Thyroid gland (tissue), 4 donors: ENCODE measurements at regions of chr20 and their contacts with region 1.

Region 1: DNA sequence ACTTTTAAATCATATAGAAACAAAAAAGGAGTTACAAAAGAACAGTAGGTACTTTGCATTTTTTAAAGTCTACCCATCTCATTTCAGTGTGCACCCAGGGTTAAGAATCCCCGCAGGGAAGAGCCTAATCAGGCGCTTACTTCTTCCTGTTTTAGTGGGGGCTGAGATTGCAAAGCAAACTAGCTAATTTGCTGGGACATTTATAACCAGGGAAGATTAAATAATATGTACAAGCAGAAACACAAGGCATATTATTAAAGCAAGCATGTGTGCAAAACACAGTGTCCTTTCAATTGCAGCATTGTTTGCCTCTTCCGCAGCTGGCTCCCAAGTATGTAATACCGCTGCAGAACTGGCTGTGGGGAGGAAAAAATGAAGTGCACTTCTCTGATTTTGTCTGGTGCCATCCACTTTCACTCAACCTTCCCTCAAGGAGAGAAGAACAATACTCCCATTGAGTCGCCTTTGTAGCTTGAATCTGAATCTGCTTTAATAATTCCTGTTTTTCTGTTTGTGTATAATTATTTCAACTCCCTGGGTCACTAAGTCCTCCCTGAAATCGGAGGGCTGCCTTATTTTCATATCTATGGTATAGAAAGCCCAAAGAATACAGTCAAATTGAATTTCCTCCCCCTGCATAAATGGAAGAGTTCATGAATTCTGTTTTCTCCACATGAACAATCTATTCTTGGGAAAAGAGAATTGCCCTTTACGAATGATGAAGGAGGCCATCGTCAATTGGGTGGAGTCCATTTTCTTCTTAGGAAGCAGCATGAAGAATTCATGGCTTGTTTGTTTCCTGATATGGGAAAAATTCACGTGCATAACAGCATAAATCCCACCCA is 23.3 kb upstream of the BCAS1 start:
- DNase-seq: no peak
- H3K4me3 ChIP-seq: no peak overlapping the region
- H3K27ac ChIP-seq: no peak overlapping the region
- H3K4me1 ChIP-seq: no peaks in the 10 kb centered on the region
- H3K27me3 ChIP-seq: no peaks in the 10 kb centered on the region
- CTCF ChIP-seq: no peak
- POLR2A ChIP-seq: no peak

Region 2: DNA sequence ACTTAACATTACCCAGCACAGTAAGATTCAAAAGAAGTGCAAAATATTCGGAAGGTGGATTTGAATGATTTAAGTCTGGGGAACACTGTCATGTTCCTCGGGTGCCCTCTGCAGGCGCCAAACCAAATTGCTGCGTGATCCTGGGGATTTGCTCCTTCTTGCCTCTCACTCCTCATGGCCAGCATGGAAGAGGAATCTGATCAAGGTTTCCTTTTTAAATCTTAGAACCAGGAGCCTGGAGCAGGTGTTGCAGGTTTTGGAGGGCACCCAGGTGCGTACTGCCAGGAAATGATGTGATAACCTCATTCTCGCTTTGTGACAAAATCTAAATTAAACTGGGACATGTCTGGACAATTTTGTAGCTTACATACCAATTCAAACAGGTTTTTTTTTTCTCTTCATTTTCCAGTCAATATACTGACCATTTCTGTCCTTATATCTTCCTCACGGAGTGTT is 106.1 kb after region 1 on chr20:
- intact Hi-C with region 1: loop called (anchors 2 kb)
- DNase-seq: peak; percentile 71 to 76
- H3K4me3 ChIP-seq: no peak overlapping the region
- H3K27ac ChIP-seq: no peak overlapping the region
- H3K4me1 ChIP-seq: peaks cover 0 to 14% of the 10 kb centered on the region in 2 donors
- H3K27me3 ChIP-seq: no peaks in the 10 kb centered on the region
- CTCF ChIP-seq: peak; percentile 74 to 92 (median 90)
- POLR2A ChIP-seq: no peak

Region 3: DNA sequence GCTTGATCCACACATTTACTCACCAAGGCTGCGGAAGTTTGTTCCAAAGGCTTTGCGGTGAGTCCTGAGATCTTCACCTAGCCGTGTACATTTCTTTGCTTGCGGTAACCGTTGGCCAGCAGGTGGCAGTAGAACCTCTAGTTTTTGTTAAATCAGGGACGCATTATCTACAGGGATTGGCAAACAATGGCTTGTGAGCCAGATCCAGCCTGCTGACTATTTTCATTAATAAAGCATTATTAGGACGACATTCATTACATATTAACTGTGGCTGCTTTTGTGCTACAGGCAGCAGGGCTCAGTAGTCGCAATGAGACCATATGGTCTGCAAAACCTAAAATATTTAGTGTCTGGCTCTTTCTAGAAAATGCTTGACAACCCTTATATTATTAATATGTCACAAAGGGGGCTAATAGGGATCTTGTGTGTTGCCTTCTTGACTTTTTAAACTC is 555.9 kb after region 1 on chr20:
- intact Hi-C with region 1: loop called (anchors 10 kb)
- DNase-seq: peak; percentile 74 to 84
- H3K4me3 ChIP-seq: no peak overlapping the region
- H3K27ac ChIP-seq: no peak overlapping the region
- H3K4me1 ChIP-seq: no peaks in the 10 kb centered on the region
- H3K27me3 ChIP-seq: no peaks in the 10 kb centered on the region
- CTCF ChIP-seq: peak; percentile 43 to 73 (median 57)
- POLR2A ChIP-seq: no peak